Adrenal gland (tissue), 19 donors: ENCODE measurements at regions of chr17 and their contacts with region 1.

Region 1: DNA sequence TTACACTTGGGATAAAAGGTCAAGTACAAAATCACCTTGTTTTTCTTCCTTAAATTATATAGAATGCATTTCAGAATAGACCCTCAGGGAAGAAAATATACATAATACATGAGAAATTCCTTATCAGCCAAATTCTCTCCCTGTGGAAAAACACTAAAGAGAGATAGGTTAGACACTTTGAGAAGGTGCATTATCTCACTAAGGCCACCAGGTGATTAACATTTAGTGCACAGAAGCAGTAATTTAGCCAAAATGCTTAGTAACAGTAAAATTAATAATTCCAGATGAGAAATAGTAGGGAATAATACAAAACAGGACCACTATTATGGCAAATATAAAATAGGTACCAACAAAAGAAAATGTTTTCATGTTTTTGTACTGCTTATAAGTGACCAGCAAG is 185.3 kb upstream of the C17orf78 start:
- DNase-seq: no peak
- H3K4me3 ChIP-seq: no peak overlapping the region
- H3K27ac ChIP-seq: no peak overlapping the region
- H3K4me1 ChIP-seq: no peaks in the 10 kb centered on the region
- H3K27me3 ChIP-seq: no peaks in the 10 kb centered on the region
- CTCF ChIP-seq: peak in 1 of 6 experiments; percentile 22
- POLR2A ChIP-seq: no peak

Region 2: GRCh38 chr17:37239690-37240334 is 49.3 kb after region 1 on chr17:
- intact Hi-C with region 1: loop called in 1 of 2 experiments (anchors 10 kb)
- DNase-seq: peak in 3 of 7 donors; percentile 29 to 54 (median 40)
- H3K4me3 ChIP-seq: no peak overlapping the region
- H3K27ac ChIP-seq: peak overlapping the region in 4 of 5 donors; percentile 7 to 70 (median 36)
- H3K4me1 ChIP-seq: peaks cover 12 to 17% of the 10 kb centered on the region in 2 donors
- H3K27me3 ChIP-seq: no peaks in the 10 kb centered on the region
- CTCF ChIP-seq: peak; percentile 44 to 77 (median 65)
- POLR2A ChIP-seq: no peak